ENCODE measurements at regions of chr7 and their contacts with region 1.

Region 1: DNA sequence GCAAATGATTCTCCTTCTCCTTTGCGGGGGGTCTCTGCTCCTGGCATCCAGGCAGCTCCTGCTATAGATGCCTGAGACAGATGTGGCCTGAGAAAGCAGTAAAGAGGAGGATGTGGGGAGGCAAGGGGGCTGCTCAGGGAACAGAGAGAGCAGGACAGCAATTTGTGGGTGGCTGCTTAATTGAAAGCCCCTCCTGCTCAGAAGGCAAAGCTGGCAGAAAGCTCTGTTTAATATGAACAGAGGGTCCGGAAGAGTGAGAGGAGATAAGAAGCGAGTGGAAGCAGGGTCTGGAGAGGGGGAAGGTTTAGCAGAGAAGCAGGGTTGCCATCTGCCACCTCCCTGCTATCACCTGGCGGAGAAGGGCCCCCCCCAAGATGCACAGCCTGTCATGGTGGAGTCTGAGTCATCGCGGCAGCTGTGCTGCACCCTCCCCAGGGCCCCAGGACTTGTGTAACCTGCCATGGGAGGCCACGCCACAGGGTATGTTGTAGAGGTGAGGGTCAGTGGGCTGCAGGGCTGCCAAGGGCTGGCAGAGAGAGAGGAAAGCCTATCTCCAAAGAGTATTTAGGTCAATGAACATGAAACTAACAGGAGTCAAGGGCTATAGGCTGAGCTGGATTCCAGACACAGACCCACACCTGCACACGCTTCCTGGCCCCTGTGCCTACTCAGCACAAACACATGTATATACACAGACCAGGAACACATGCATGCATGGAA is 1109.8 kb upstream of the AUTS2 start:
- DNase-seq: no peak
- ATAC-seq: no peak
- H3K4me3 ChIP-seq: no peak overlapping the region
- H3K27ac ChIP-seq: no peak overlapping the region
- H3K4me1 ChIP-seq: no peaks in the 10 kb centered on the region
- H3K27me3 ChIP-seq: no peaks in the 10 kb centered on the region
- CTCF ChIP-seq: no peak

Region 2: DNA sequence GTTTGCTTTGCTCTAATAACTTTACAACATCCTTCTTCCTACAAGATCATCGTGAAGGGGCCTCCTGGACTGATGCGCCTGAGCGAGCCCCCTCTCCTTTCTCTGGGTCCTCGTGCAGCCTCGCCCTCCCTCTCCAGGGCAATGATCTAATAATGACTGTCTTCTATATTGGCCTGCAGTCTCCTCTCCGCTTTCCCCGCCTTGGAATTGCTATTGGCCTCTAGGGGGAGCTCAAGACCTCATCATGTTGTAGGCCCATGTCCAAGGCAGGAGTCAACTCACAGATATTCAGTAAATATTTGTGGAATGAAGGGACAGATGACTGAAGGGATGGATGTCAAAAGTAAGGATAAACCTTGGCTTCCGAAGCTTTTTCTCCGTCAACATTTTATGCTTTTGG is 311.5 kb before region 1 on chr7:
- intact Hi-C with region 1: loop called in 1 of 2 experiments (anchors 5 kb)
- DNase-seq: peak in 1 of 2 donors; percentile 29
- ATAC-seq: peak; percentile 73 to 83 (median 78)
- H3K4me3 ChIP-seq: no peak overlapping the region
- H3K27ac ChIP-seq: no peak overlapping the region
- H3K4me1 ChIP-seq: no peaks in the 10 kb centered on the region
- H3K27me3 ChIP-seq: no peaks in the 10 kb centered on the region
- CTCF ChIP-seq: peak; percentile 71